GM23248 (cell line): ENCODE measurements at regions of chr11 and their contacts with region 1.

Region 1: DNA sequence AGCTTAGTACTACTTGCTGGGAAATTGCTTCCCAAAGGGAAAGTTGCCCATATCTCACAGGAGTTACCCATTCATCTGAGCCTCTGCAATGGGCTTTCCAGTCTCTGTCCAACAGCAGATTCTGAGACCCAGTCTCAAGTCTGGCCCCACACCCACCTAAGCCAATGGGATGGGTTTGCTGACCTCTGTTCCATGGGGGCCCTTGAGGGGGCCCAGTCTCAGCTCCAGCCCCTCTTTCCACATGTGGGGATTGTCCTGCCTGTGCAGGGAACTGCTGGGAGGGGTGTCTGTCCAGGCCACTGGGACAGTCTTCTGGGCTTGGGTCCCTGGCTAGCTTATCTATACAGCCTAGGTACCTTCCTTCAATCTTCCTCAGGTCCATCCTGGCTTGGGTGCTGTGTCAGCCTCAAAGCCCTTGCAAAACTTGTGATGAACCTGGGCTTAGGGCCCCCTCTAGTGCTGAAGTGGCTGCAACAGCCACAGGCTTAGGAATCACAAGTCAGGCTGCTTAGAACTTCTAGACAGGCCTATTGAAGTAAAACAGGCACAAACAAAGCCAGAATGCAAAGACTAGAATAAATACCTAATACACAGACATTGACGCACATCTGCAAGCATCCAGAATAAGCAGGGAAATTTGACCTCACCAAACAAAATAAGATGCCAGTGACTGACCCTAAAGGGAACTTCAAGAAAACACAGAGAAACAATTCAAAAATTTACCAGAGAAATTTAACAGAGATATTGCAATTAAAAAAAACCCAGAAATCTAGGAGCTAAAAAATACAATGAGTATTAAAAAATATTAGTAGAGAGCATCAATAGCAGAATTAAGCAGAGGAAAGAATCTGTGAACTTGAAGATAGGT is 11.7 kb upstream of the PATL1 start:
- DNase-seq: peak; percentile 85
- H3K4me3 ChIP-seq: no peak overlapping the region
- H3K27ac ChIP-seq: no peak overlapping the region
- H3K4me1 ChIP-seq: peaks cover 7% of the 10 kb centered on the region
- H3K27me3 ChIP-seq: no peaks in the 10 kb centered on the region

Region 2: GRCh38 chr11:59119826-59120225 is 560.7 kb before region 1 on chr11:
- in situ Hi-C with region 1: no loop called
- DNase-seq: no peak
- H3K4me3 ChIP-seq: no peak overlapping the region
- H3K27ac ChIP-seq: no peak overlapping the region
- H3K4me1 ChIP-seq: no peaks in the 10 kb centered on the region
- H3K27me3 ChIP-seq: no peaks in the 10 kb centered on the region

Region 3: DNA sequence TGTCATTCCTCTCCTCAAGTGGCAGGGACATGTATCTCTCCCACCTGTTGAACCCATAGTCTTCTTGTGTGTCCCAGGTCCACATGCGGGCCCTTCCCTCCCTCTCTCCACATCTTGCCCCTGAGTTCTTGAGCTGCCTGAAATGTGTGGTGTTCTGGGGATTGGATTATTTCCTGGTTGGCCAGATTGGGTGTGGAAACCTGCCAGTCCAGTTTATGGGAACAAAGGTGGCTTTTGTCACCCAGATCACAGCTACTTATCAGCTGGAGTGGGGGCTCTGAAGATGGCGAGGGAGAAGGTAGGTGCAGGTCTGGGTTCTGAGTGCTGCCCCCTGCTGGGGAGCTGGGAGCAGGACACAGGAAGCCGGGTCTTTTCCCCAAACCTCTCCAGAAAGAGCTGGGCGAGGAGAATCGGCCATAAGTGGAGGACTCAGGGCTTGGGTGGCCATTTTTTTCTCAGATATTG is 494.4 kb before region 1 on chr11:
- in situ Hi-C with region 1: loop called (anchors 25 kb)
- DNase-seq: peak; percentile 41
- H3K4me3 ChIP-seq: no peak overlapping the region
- H3K27ac ChIP-seq: no peak overlapping the region
- H3K4me1 ChIP-seq: no peaks in the 10 kb centered on the region
- H3K27me3 ChIP-seq: no peaks in the 10 kb centered on the region; the same call in 1 of the 2 replicates

Region 4: DNA sequence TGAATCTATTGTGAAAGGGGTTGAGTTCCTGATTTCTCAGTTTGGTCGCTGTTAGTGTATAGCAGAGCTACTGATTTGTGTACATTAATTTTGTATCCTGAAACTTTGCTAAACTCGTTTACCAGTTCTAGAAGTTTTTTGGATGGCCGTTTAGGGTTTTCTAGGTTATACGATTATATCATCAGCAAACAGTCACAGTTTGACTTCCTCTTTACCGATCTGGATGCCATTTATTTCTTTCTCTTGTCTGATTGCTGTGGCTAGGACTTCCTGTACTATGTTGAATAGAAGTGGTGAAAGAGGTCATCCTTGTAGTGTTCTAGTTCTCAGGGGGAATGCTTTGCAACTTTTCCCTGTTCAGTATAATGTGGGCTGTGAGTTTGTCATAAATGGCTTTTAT is 311.9 kb after region 1 on chr11:
- in situ Hi-C with region 1: no loop called
- DNase-seq: no peak
- H3K4me3 ChIP-seq: no peak overlapping the region
- H3K27ac ChIP-seq: no peak overlapping the region
- H3K4me1 ChIP-seq: no peaks in the 10 kb centered on the region
- H3K27me3 ChIP-seq: no peaks in the 10 kb centered on the region